ENCODE measurements at regions of chr5 and their contacts with region 1.

Region 1: DNA sequence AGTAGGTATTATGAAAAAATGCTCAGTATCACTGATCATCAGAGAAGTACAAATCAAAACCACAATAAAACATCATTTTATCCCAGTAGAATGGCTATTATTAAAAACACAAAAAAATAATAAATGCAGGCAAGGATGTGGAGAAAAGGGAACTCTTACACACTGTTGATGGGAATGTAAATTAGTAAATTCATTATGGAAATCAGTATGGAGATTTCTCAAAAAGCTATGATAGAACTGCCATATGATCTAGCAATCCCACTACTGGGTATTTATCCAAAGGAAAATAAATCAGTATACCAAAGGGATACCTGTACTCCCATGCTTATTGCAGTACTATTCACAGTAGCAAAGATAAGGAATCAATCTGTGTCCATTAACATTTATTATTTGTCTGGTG is 209.6 kb downstream of the FER start:
- DNase-seq: no peak
- H3K4me3 ChIP-seq: no peak overlapping the region
- H3K27ac ChIP-seq: no peak overlapping the region
- H3K4me1 ChIP-seq: no peaks in the 10 kb centered on the region
- H3K27me3 ChIP-seq: no peaks in the 10 kb centered on the region
- CTCF ChIP-seq: no peak

Region 2: GRCh38 chr5:107948373-107948772 is 1009.0 kb before region 1 on chr5:
- CTCF ChIA-PET with region 1: no interaction called
- POLR2A ChIA-PET with region 1: no interaction called
- intact Hi-C with region 1: no loop called
- DNase-seq: no peak
- H3K4me3 ChIP-seq: no peak overlapping the region
- H3K27ac ChIP-seq: no peak overlapping the region
- H3K4me1 ChIP-seq: no peaks in the 10 kb centered on the region
- H3K27me3 ChIP-seq: no peaks in the 10 kb centered on the region
- CTCF ChIP-seq: no peak

Region 3: DNA sequence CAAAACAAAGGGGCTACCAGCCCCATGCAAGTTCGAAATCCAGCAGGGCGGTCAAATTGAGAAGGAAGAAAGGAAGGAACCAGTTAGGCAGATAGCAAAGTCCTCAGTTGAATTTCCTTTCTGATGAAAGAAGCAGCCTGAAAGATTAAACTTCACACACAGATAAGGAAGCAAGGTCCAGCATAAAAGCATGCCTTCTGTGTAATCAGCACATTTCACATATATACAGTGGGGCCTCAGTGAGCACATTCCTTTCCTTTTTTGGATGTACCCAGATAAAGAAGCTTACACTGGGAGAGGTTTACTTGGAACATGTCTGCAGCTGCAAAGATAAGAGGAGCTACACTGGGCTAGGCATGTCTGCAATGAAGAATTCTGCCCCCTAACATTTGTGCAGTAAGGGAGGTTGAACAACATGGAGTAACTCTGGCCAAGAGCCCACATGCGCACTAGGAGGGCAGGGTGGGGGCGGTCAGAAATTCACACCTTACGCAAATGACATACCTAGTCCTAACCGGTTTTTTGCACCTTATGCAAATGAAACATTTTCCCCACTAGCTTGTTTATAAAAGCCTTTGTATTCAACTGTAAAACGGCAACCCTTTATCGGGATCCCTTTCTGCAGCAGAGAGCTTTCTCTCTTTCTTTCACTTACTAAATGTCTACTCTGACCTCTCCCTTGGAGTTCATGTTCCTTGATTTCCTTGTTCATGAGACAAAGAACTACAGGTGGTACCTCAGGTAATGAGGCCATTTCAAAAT is 425.8 kb before region 1 on chr5:
- CTCF ChIA-PET with region 1: interaction called, 15 read pairs
- POLR2A ChIA-PET with region 1: no interaction called
- intact Hi-C with region 1: no loop called
- DNase-seq: no peak
- H3K4me3 ChIP-seq: no peak overlapping the region
- H3K27ac ChIP-seq: no peak overlapping the region
- H3K4me1 ChIP-seq: no peaks in the 10 kb centered on the region
- H3K27me3 ChIP-seq: no peaks in the 10 kb centered on the region
- CTCF ChIP-seq: no peak

Region 4: GRCh38 chr5:108942701-108943100 is 14.6 kb before region 1 on chr5:
- CTCF ChIA-PET with region 1: no interaction called
- POLR2A ChIA-PET with region 1: no interaction called
- intact Hi-C with region 1: no loop called
- DNase-seq: peak; percentile 22
- H3K4me3 ChIP-seq: no peak overlapping the region
- H3K27ac ChIP-seq: no peak overlapping the region
- H3K4me1 ChIP-seq: peaks cover 15% of the 10 kb centered on the region
- H3K27me3 ChIP-seq: no peaks in the 10 kb centered on the region
- CTCF ChIP-seq: no peak

Region 5: GRCh38 chr5:109080896-109081295 is 123.6 kb after region 1 on chr5:
- CTCF ChIA-PET with region 1: no interaction called
- POLR2A ChIA-PET with region 1: no interaction called
- intact Hi-C with region 1: no loop called
- DNase-seq: no peak
- H3K4me3 ChIP-seq: no peak overlapping the region
- H3K27ac ChIP-seq: no peak overlapping the region
- H3K4me1 ChIP-seq: no peaks in the 10 kb centered on the region
- H3K27me3 ChIP-seq: no peaks in the 10 kb centered on the region
- CTCF ChIP-seq: no peak